ENCODE measurements at regions of chr3 and their contacts with region 1.

Region 1: DNA sequence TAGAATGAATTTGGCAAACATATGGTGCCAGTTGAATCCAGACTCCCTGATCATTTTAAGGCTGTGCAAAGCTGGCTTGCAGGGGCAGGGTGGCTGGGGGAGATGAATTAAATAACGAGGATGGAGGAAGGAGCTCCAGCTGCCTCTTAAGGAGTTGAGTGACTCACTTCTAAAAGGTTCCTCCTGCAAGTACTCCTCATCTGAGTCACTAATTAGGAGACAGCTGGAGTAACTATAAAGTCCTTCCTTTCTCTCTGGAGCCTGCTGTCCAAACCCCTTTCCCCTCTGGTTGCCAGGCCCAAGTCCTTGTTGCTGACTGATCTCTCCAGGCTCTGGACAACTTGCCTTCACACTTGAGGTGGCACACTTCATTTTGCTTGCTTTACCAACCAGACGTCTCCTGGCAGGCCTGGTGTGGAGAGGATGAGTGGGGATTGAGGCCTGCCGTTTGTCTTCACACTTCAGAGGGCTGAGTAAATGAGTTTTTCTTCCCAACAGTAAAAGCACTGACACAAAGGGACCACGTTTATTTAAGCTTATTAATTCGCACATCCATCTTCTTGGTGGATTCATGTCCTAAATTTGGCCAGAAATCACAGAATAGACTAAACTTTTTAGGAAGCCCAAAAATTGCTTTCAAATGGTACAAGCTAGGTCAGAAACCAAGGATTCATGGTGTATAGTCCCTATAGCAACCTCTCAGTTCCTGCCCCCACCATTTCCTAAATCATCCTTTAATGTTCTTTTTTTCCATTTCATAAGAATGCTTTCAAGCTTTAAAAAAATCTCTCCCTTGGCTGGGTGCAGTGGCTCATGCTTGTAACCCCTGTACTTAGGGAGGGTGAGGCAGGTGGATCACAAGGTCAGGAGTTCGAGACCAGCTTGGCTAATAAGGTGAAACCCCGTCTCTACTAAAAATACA is 90.5 kb upstream of the MYRIP start:
- DNase-seq: no peak

Region 2: GRCh38 chr3:39990532-39990931 is 271.6 kb after region 1 on chr3:
- intact Hi-C with region 1: loop called (anchors 10 kb)
- DNase-seq: no peak

Measured in cardiac septum (tissue), 1 donor.